ENCODE measurements at regions of chr13 and their contacts with region 1.

Region 1: GRCh38 chr13:29935309-29935981 is 85.0 kb upstream of the UBL3 start:
- DNase-seq: peak; percentile 82
- H3K4me3 Mint-ChIP-seq: peak overlapping the region; percentile 86
- H3K27ac Mint-ChIP-seq: peak overlapping the region; percentile 95
- H3K4me1 Mint-ChIP-seq: peaks cover 69% of the 10 kb centered on the region
- H3K27me3 Mint-ChIP-seq: no peaks in the 10 kb centered on the region

Region 2: DNA sequence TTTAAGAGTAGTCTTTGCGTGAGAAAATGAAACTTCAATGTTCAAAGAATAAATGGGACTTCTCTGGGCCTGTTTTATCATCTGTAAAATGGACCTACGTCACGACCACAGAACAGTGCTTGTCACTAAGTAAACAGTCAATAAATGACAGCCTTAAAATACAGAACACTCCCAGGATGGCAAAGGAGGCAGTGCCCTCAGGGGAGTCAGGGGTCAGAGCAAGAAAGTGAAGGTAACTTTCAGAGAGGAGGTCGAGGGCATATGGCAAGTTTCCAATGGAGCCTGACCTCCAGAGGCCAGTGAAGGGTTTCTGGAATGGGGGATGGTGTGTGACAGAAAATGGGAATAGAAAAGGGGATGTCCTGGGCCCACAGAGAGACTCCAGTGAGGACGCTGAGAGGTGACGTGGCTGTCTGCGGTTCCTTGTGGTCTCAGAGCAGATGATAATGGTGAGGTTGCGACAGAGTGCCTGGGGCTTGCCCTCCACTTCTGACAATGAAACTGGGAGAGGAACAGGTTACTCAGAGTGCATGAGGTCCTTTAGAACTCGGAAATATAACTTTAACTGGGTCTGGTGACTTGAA is 176.8 kb before region 1 on chr13:
- intact Hi-C with region 1: loop called (anchors 2 kb)
- DNase-seq: peak; percentile 26
- H3K4me3 Mint-ChIP-seq: peak overlapping the region; percentile 32
- H3K27ac Mint-ChIP-seq: peak overlapping the region; percentile 74
- H3K4me1 Mint-ChIP-seq: peaks cover 22% of the 10 kb centered on the region
- H3K27me3 Mint-ChIP-seq: peaks cover 3% of the 10 kb centered on the region

Region 3: DNA sequence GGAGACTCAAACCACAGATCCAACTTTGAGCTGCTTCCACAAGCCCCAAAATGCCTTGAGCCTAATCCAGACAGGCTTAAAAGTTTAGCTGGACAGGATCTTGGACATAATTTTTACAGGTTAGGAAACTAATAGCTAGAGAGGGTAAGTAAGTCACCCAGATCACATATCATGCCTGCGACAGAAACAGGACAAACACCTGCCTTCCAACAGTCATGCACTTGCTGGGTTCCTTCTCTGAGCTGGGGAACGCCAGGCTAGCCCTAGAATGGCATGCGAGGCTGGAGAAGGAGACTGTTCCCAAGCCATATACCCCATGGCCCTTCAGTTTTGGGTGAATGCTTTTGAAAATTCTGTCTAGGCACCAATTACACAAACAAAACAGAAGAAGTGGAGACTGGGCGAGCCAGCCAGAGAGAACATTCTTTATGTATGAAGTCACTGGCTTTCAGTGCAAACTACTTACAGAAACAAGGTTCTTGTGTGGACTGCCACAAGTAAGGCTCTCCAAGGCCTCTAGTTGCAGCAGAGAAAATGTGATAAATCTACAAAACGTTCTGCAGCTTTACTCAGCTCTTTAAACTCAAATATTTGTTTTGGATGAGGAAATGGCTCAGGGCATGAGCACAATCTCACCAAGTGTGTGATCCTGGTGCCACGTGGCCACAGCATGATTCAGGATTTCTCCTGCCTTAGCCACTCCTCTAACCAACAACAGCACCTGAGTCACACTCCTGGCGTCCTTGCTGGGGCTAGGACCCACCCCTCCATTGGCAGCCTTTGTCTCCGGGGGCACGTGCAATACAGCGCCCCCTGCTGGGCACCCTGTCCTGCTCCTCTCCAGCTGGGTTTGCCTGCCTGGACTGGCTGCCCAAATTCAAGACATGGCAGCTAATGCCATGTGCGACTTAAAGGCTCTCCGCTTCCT is 11.6 kb before region 1 on chr13:
- intact Hi-C with region 1: loop called (anchors 1 kb)
- DNase-seq: peak; percentile 14
- H3K4me3 Mint-ChIP-seq: no peak overlapping the region
- H3K27ac Mint-ChIP-seq: no peak overlapping the region
- H3K4me1 Mint-ChIP-seq: peaks cover 31% of the 10 kb centered on the region
- H3K27me3 Mint-ChIP-seq: peaks cover 10% of the 10 kb centered on the region

Region 4: GRCh38 chr13:30045916-30046704 is 110.7 kb after region 1 on chr13:
- intact Hi-C with region 1: loop called (anchors 2 kb)
- DNase-seq: no peak
- H3K4me3 Mint-ChIP-seq: no peak overlapping the region
- H3K27ac Mint-ChIP-seq: peak overlapping the region; percentile 25
- H3K4me1 Mint-ChIP-seq: peaks cover 23% of the 10 kb centered on the region
- H3K27me3 Mint-ChIP-seq: peaks cover under 1% of the 10 kb centered on the region

Region 5: GRCh38 chr13:30142486-30143211 is 207.2 kb after region 1 on chr13:
- intact Hi-C with region 1: loop called (anchors 1 kb)
- DNase-seq: peak; percentile 28
- H3K4me3 Mint-ChIP-seq: peak overlapping the region; percentile 31
- H3K27ac Mint-ChIP-seq: peak overlapping the region; percentile 86
- H3K4me1 Mint-ChIP-seq: peaks cover 61% of the 10 kb centered on the region
- H3K27me3 Mint-ChIP-seq: peaks cover 4% of the 10 kb centered on the region

Region 6: DNA sequence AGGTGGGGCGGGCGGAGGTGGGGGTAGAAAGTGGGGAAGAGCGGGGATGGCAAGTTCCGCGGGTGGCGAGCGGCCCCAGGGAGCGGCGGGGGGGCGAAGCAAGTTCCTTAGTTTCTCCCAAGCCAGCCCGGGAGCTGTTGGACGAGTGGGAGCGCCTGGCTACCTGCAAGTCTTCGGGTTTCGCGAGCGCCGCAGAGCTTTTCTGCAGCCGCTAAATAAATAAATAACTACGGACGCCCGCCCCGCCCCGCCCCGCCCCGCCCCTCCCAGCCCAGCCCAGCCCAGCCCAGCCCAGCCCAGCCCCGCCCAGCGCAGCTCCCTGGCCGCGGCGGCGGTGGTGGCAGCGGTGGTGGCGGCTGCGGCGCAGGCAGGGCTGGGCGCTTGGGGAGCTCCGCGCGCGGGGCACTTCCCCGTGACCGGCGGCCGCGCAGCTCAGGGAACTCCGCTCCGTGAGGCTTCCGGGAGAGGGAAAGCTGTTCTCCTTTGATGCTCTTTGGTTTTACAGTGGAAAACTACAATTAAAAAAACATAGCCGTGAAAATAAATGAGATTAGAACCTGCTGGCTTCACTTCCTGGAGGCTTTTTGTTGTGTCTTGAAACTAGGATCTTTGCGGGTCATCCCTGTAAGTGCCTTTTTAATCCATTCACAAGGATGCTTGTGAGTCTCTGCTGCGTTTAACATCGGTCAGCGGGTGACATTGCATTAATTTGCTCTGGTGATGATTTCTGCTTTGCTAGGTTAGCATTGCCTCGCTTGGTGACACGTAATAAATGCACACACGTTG is 486.8 kb after region 1 on chr13 and contains the start of gene UBE2L5:
- intact Hi-C with region 1: loop called (anchors 10 kb)
- DNase-seq: peak; percentile 75
- H3K4me3 Mint-ChIP-seq: peak within 1 kb of the TSS; percentile 88
- H3K27ac Mint-ChIP-seq: peak within 1 kb of the TSS; percentile 86
- H3K4me1 Mint-ChIP-seq: peaks cover 26% of the 10 kb centered on the region
- H3K27me3 Mint-ChIP-seq: peaks cover 4% of the 10 kb centered on the region
- total RNA-seq, gene UBE2L5: not detected in 2 replicates

Measured in activated T-helper 1 cell treated with anti-CD3 and anti-CD28 coated beads, Interleukin-12 subunit alpha, Interleukin-12 subunit beta, Interleukin-2, Interleukin-4 antibody, amounts not matched to agents 30 ng/mL and 10 ng/mL and 1 ng/mL, durations not matched to agents 14 hours and 24 hours and 36 hours (primary cell).